ENCODE measurements at regions of chr6 and their contacts with region 1.

Region 1: DNA sequence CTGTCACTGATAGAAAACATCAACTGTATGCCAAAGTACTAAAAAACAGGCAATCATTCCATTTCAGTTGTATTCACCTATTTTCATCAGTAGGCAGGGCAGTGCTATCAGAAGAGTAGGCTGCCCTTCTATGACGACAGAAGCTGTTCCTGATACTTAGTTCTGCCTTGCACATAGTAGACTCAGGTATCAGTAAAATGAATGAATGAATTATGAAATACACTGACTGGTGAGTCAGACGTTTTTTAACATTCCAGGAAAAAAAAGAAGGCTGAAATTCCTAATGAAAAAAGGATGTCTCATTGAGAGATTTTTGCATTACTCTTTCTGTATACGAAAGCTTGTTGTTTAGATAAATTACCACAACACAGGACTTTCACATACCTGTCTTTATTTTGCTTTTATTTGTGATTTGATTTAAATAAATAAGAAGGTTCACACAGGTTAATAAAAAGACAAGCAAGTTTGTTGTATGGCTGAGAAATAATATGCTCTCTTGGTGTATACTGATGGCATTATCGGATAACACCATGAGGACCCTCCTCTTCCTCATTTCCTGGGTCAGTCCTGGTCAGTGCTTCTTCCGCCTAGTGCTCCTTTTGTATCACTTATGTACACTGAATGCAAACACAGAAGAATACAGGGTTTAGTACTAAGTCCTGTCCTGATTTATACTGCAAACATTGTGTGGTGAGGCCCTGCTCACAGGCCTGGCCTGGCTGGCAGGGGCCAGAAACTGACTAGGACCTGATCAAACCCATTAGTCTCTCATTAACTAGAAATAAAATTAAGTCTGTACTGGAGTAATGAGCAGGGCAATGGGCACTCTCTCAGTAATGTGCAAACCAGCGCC is 39.4 kb upstream of the SPDEF start:
- DNase-seq: no peak
- H3K4me3 Mint-ChIP-seq: no peak overlapping the region
- H3K27ac Mint-ChIP-seq: no peak overlapping the region
- H3K4me1 Mint-ChIP-seq: peaks cover 32% of the 10 kb centered on the region
- H3K27me3 Mint-ChIP-seq: no peaks in the 10 kb centered on the region
- CTCF ChIP-seq: no peak

Region 2: DNA sequence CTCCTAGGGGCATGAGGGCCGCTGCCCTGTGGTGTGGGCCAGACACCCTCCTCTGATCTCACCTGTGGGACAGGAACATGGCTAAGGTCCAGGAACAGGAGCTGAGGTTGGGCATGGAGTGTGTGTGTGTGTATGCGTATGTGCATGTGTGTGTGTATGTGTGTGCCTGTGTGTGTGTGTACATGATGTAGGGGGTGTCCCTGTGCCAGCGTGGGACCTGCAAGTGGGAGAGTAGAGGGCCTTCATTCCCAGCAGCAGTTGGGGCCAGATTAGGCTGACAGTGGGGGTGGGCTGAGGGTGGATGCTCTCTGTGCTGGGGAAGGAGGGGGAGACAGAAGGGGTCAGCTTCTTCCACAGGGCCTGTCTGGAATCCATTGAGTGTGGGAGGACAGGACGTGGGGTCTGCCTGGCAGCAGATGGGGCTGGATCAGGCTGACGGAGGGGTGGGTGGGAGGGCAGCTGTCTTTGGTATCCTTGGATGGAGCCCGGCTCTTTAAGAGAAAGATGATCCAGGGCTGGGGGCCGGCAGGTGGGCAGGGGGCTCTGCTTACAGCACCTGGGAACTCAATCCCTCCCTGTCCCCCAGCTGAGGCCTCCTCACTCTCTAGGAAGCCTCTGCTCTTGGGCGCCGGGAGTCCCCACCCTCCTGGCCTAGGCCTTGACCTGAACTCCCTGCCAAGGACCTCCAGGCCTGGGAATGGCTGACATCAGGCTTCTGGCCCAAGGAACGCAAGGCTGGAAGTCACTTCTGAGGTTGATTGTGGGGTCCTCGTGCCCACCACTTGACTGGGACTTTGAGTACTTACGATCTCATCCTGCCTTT is 83.4 kb before region 1 on chr6:
- CTCF ChIA-PET with region 1: interaction called, 11 read pairs
- intact Hi-C with region 1: no loop called
- DNase-seq: no peak
- H3K4me3 Mint-ChIP-seq: no peak overlapping the region
- H3K27ac Mint-ChIP-seq: no peak overlapping the region
- H3K4me1 Mint-ChIP-seq: no peaks in the 10 kb centered on the region
- H3K27me3 Mint-ChIP-seq: peaks cover 61% of the 10 kb centered on the region
- CTCF ChIP-seq: no peak

Region 3: DNA sequence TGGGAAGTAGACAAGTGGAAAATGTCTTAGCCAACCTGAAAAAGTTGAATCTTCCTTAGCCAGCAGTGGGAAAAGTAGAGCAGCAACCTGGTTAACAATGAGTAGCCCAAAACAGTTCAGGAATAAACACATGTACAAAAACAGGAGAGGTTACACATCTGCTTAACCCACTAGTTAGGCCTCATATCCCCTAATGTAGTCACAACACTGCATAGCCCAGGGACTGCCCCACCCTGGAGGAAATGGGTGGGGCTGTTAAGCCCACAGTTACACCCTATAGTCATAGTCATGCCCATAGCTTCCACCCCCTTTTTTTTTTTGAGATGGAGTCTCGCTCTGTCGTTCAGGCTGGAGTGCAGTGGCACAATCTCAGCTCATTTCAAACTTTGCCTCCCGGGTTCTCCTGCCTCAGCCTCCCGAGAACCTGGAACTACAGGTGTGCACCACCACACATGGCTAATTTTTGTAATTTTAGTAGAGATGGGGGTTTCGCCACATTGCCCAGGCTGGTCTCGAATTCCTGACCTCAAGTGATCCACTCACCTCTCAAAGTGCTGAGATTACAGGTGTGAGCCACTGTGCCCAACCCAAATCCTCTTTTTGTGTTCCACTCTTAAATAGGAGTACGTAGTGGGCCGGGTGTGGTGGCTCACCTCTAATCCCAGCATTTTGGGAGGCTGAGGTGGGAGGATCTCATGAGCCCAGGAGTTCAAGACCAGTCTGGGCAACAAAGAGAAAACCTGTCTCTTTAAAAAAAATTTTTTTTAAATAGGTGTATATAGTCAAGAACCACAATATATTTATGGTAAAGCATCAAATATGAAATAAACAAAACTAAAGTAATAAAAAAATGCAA is 76.5 kb after region 1 on chr6:
- CTCF ChIA-PET with region 1: no interaction called
- intact Hi-C with region 1: no loop called
- DNase-seq: peak; percentile 47
- H3K4me3 Mint-ChIP-seq: no peak overlapping the region
- H3K27ac Mint-ChIP-seq: peak overlapping the region; percentile 61
- H3K4me1 Mint-ChIP-seq: peaks cover 56% of the 10 kb centered on the region
- H3K27me3 Mint-ChIP-seq: no peaks in the 10 kb centered on the region
- CTCF ChIP-seq: no peak